CD4-positive, alpha-beta memory T cell (primary cell): ENCODE measurements at regions of chr16 and their contacts with region 1.

Region 1: DNA sequence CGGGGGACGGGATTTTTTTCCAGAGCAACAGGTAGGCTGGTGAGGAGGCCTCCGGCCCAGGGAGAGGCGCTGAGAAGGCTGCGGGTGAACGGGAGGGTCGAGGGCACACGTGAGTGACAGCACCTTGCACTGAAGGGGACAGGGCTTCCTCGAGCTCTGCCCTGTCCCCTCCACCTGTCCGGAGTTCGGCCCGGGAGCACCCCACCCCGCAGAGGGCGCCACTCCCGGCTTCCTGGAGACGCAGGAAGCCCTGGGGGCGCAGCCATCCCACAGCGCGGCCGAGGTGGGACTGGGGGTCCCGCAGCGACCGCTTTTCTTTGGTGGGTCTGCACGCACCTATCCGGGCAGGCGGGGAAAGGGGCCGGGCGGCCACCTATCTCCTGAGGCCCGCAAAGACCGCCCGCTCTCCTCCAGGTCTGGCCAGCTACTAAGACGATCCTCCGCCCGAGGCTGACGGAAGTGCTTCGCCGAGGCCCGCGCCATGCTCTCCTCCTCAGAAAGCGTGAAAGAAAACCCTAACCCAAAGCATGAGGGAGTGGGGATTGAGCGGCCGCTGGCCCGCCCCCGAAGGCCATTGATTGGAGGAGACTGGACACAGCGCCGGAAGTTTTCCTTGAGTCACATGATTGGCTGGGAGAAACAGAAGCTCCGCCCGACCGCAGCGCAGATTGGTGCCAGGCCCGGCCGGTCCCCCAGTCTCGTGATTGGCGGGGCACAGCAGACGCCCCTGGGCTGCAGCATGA is 34.3 kb downstream of the DDX19A start:
- DNase-seq: peak; percentile 94 to 97 (median 95)
- H3K4me3 ChIP-seq: peak overlapping the region; percentile 76 to 82
- H3K4me3 Mint-ChIP-seq: peak overlapping the region; percentile 92 to 99 (median 96)
- H3K27ac ChIP-seq: peak overlapping the region; percentile 66
- H3K27ac Mint-ChIP-seq: peak overlapping the region; percentile 90 to 99 (median 98)
- H3K4me1 ChIP-seq: peaks cover 19% of the 10 kb centered on the region
- H3K4me1 Mint-ChIP-seq: peaks cover 5 to 38% (median 13%) of the 10 kb centered on the region in 4 donors
- H3K27me3 ChIP-seq: no peaks in the 10 kb centered on the region
- H3K27me3 Mint-ChIP-seq: no peaks in the 10 kb centered on the region

Region 2: GRCh38 chr16:70251629-70252354 is 129.2 kb before region 1 on chr16 and contains the start of gene EXOSC6:
- CTCF ChIA-PET with region 1: interaction called, 3 read pairs
- POLR2A ChIA-PET with region 1: interaction called, 9 read pairs
- intact Hi-C with region 1: loop called (anchors 1 kb)
- DNase-seq: peak; percentile 92 to 94 (median 93)
- H3K4me3 ChIP-seq: peak within 1 kb of the TSS in 1 of 2 donors; percentile 62
- H3K4me3 Mint-ChIP-seq: peak within 1 kb of the TSS; percentile 88 to 92 (median 90)
- H3K27ac ChIP-seq: peak within 1 kb of the TSS; percentile 73
- H3K27ac Mint-ChIP-seq: peak within 1 kb of the TSS; percentile 88 to 96 (median 94)
- H3K4me1 ChIP-seq: peaks cover 28% of the 10 kb centered on the region
- H3K4me1 Mint-ChIP-seq: peaks cover 9 to 35% (median 24%) of the 10 kb centered on the region in 4 donors
- H3K27me3 ChIP-seq: no peaks in the 10 kb centered on the region
- H3K27me3 Mint-ChIP-seq: no peaks in the 10 kb centered on the region
- total RNA-seq, gene EXOSC6: 43.5 to 44.1 TPM

Region 3: DNA sequence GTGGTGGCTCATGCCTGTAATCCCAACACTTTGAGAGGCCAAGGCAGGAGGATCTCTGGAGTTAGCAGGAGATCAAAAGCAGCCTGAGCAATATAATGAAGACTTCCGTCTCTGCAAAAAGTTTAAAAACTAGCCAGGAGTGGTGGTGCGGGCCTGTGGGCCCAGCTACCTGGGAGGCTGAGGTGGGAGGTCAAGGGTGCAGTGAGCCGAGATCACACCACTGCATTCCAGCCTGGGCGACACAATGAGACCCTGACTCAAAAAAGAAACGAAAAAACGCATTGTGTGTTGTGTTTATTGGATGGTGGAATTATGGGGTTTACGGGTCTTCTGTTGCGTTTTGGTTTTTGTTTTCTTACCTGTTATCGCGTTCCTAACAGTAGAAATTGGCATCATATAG is 35.2 kb before region 1 on chr16:
- CTCF ChIA-PET with region 1: interaction called, 5 read pairs
- POLR2A ChIA-PET with region 1: interaction called, 61 read pairs
- intact Hi-C with region 1: loop called (anchors 1 kb)
- DNase-seq: no peak
- H3K4me3 ChIP-seq: peak overlapping the region in 1 of 2 donors; percentile 93
- H3K4me3 Mint-ChIP-seq: peak overlapping the region; percentile 81 to 96 (median 94)
- H3K27ac ChIP-seq: peak overlapping the region; percentile 87
- H3K27ac Mint-ChIP-seq: peak overlapping the region; percentile 91 to 99 (median 99)
- H3K4me1 ChIP-seq: peaks cover 24% of the 10 kb centered on the region
- H3K4me1 Mint-ChIP-seq: peaks cover 16 to 44% (median 23%) of the 10 kb centered on the region in 4 donors
- H3K27me3 ChIP-seq: no peaks in the 10 kb centered on the region
- H3K27me3 Mint-ChIP-seq: no peaks in the 10 kb centered on the region

Region 4: DNA sequence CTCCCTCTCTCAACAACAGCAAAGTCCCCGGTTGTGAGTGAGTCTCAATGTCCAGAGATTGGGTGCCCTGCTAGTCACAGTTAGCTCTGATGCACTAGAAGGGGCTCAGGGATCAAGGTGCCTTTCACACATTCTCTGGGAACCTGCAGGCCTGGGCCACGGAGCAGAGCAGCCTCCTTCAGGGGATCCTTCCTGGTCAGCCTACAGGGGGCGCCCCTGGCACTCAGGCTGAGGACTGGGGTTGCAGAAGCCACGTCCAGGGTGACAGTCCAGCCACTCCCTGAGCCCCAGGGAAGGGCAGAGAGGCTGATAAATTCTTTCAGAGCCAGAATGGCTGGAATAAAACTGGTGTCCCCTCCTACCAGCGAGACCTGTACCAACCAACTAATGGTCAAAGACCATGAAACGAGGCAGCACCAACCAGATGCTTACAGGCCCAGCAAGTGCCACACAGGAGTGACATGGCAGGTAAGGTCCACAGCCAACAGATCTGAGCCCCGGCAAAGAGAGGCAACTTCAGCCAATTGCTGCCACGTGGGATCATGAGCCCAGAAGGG is 14.4 kb after region 1 on chr16:
- CTCF ChIA-PET with region 1: interaction called, 10 read pairs
- POLR2A ChIA-PET with region 1: interaction called, 12 read pairs
- intact Hi-C with region 1: no loop called
- DNase-seq: peak in 4 of 5 donors; percentile 48 to 50 (median 49)
- H3K4me3 ChIP-seq: no peak overlapping the region
- H3K4me3 Mint-ChIP-seq: no peak overlapping the region
- H3K27ac ChIP-seq: no peak overlapping the region
- H3K27ac Mint-ChIP-seq: peak overlapping the region in 2 of 7 donors; percentile 63 to 66
- H3K4me1 ChIP-seq: no peaks in the 10 kb centered on the region
- H3K4me1 Mint-ChIP-seq: peaks cover 0 to 2% (median under 1%) of the 10 kb centered on the region in 4 donors
- H3K27me3 ChIP-seq: no peaks in the 10 kb centered on the region
- H3K27me3 Mint-ChIP-seq: no peaks in the 10 kb centered on the region

Region 5: DNA sequence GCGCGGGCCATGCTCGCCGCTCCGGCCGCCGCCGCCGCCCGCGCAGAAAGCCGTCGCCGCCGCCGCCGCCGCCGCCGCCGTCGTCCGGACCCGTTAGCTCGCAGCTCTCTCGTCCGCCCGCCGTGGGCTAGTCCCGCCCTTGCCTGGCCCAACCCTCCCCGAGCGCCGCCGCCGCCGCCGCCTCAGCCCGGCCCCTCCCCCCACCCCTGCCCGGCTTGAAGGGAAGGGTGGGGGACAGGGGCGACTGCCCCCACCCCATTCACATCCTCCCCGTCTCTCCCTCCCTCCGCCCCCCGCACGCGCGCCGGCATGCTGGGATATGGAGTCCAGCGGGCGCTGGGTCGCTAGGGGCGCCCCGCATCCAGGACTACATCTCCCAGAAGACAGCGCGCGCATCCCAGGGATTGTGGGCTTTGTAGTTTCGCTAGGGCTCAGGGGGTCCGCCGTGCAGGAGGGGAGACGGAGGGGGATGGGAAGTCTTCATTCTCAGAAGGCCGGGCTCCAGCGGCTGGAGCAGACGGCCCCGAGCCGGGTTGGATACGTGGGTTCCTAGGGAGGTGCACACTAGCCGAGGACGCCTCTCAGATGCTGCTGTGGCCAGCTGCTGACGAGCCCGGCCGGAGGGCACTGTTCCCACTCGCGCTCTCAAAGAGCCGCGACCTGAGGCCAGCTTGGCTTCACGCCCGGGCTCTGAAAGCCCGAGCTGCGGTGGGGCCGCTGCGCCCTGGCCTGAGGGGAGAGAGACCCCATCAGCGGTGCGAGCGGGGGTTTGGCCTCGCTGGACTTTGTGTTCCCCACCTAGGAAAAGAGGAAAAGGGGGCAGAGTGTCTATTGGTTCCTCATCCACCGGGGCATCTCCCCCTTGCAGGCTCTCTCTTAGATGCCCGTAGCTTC is 58.2 kb after region 1 on chr16 and contains the start of gene ST3GAL2:
- CTCF ChIA-PET with region 1: interaction called, 4 read pairs
- POLR2A ChIA-PET with region 1: interaction called, 59 read pairs
- intact Hi-C with region 1: loop called (anchors 1 kb)
- DNase-seq: peak; percentile 90 to 94 (median 91)
- H3K4me3 ChIP-seq: peak within 1 kb of the TSS; percentile 67 to 95
- H3K4me3 Mint-ChIP-seq: peak within 1 kb of the TSS; percentile 93 to 99 (median 96)
- H3K27ac ChIP-seq: peak within 1 kb of the TSS; percentile 64
- H3K27ac Mint-ChIP-seq: peak within 1 kb of the TSS; percentile 86 to 97 (median 94)
- H3K4me1 ChIP-seq: peaks cover 35% of the 10 kb centered on the region
- H3K4me1 Mint-ChIP-seq: peaks cover 17 to 49% (median 35%) of the 10 kb centered on the region in 4 donors
- H3K27me3 ChIP-seq: no peaks in the 10 kb centered on the region
- H3K27me3 Mint-ChIP-seq: no peaks in the 10 kb centered on the region
- total RNA-seq, gene ST3GAL2: 27.5 to 30.8 TPM

Region 6: DNA sequence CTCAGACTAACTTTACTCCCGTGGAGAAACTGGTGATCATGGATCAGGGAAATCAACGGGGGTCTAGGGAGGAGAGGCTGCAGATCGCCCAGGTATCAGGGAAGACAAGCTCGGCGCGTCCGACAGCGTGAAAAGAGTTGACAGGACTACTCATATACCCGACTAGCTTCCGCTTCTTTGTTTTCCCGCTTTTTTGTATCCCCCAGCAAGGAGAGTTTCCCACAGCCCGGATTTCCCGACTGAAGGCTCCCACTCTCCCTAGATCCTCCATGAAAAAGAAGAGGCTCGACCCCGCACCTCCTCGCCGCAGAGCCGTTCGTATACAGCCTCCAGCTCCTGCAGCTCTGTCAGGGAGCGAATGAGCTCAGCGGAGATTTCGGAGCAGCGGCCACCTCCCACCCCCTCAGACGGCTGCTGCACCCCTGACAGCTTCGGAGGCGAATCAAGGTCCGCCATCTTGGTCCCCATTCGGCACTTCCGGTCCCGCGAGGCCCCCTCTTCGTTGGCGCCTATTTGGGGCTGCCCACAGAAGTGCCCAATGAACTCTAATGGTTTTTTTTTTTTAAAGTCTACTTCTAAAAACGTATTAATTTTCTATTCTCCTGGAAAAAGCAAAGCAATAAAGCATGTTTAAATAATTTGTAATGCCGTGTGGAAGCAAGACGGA is 142.2 kb after region 1 on chr16 and contains the start of gene COG4:
- CTCF ChIA-PET with region 1: interaction called, 4 read pairs
- POLR2A ChIA-PET with region 1: interaction called, 58 read pairs
- intact Hi-C with region 1: loop called (anchors 1 kb)
- DNase-seq: peak; percentile 90 to 94 (median 91)
- H3K4me3 ChIP-seq: peak within 1 kb of the TSS; percentile 90 to 97
- H3K4me3 Mint-ChIP-seq: peak within 1 kb of the TSS; percentile 96 to 99 (median 98)
- H3K27ac ChIP-seq: peak within 1 kb of the TSS; percentile 86
- H3K27ac Mint-ChIP-seq: peak within 1 kb of the TSS; percentile 97 to 100 (median 99)
- H3K4me1 ChIP-seq: peaks cover 64% of the 10 kb centered on the region
- H3K4me1 Mint-ChIP-seq: peaks cover 35 to 75% (median 54%) of the 10 kb centered on the region in 4 donors
- H3K27me3 ChIP-seq: no peaks in the 10 kb centered on the region
- H3K27me3 Mint-ChIP-seq: no peaks in the 10 kb centered on the region
- total RNA-seq, gene COG4: 66.5 to 68.9 TPM